Mammary epithelial cell (primary cell): ENCODE measurements at regions of chr6 and their contacts with region 1.

Region 1: DNA sequence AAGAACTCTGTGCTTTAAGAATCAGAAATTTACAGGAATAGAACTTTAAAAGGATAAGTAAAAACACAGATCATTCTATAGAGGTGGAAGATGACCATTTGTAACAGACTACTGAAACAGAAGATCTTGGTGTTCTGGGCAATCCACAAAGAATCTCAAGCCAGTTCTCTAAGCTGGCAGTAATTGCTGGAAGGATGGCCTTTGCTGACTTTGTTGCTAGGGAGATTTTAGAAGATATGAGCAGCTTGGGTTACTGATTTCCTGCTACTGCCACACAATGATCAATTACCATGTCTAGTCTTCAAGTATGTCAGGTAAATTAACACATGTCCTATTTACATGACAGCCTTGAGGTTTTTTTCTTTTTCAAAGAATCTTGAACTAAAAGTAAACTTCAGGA is 31.1 kb downstream of the SNAP91 start:
- DNase-seq: no peak
- H3K4me3 ChIP-seq: no peak overlapping the region
- H3K27ac ChIP-seq: no peak overlapping the region
- H3K4me1 ChIP-seq: no peaks in the 10 kb centered on the region
- H3K27me3 ChIP-seq: peaks cover 2% of the 10 kb centered on the region
- CTCF ChIP-seq: no peak

Region 2: GRCh38 chr6:83722876-83723275 is 45.1 kb after region 1 on chr6:
- CTCF ChIA-PET with region 1: no interaction called
- dilution Hi-C with region 1: loop called (anchors 5 kb)
- in situ Hi-C with region 1: no loop called
- intact Hi-C with region 1: no loop called
- DNase-seq: no peak
- H3K4me3 ChIP-seq: no peak overlapping the region
- H3K27ac ChIP-seq: no peak overlapping the region
- H3K4me1 ChIP-seq: no peaks in the 10 kb centered on the region
- H3K27me3 ChIP-seq: no peaks in the 10 kb centered on the region
- CTCF ChIP-seq: no peak

Region 3: DNA sequence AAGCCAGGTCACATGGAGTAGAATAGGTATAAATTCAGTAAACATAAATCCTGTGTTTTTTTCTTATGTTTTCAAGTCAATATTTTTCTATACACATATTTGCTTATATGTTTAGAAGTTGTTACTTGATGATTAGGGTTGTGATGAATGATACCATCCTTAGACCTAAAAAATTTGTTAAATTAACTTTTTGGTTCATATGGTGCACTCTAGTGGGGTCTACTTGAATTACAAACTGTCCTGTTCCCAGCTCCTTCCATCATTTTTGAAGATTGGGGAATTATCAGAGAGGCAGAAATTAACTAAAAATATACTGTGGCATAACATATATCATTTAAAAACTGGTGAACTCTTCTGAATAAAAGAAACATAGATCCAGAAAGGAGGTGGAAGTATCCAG is 127.1 kb after region 1 on chr6:
- CTCF ChIA-PET with region 1: no interaction called
- dilution Hi-C with region 1: no loop called
- in situ Hi-C with region 1: no loop called
- intact Hi-C with region 1: no loop called
- DNase-seq: no peak
- H3K4me3 ChIP-seq: no peak overlapping the region
- H3K27ac ChIP-seq: no peak overlapping the region
- H3K4me1 ChIP-seq: no peaks in the 10 kb centered on the region
- H3K27me3 ChIP-seq: no peaks in the 10 kb centered on the region
- CTCF ChIP-seq: peak in 1 of 2 donors; percentile 5

Region 4: GRCh38 chr6:83952830-83953229 is 275.0 kb after region 1 on chr6:
- CTCF ChIA-PET with region 1: no interaction called
- dilution Hi-C with region 1: no loop called
- in situ Hi-C with region 1: no loop called
- intact Hi-C with region 1: no loop called
- DNase-seq: no peak
- H3K4me3 ChIP-seq: no peak overlapping the region
- H3K27ac ChIP-seq: no peak overlapping the region
- H3K4me1 ChIP-seq: no peaks in the 10 kb centered on the region
- H3K27me3 ChIP-seq: no peaks in the 10 kb centered on the region
- CTCF ChIP-seq: no peak